Endothelial cell of umbilical vein (primary cell): ENCODE measurements at regions of chr3 and their contacts with region 1.

Region 1: DNA sequence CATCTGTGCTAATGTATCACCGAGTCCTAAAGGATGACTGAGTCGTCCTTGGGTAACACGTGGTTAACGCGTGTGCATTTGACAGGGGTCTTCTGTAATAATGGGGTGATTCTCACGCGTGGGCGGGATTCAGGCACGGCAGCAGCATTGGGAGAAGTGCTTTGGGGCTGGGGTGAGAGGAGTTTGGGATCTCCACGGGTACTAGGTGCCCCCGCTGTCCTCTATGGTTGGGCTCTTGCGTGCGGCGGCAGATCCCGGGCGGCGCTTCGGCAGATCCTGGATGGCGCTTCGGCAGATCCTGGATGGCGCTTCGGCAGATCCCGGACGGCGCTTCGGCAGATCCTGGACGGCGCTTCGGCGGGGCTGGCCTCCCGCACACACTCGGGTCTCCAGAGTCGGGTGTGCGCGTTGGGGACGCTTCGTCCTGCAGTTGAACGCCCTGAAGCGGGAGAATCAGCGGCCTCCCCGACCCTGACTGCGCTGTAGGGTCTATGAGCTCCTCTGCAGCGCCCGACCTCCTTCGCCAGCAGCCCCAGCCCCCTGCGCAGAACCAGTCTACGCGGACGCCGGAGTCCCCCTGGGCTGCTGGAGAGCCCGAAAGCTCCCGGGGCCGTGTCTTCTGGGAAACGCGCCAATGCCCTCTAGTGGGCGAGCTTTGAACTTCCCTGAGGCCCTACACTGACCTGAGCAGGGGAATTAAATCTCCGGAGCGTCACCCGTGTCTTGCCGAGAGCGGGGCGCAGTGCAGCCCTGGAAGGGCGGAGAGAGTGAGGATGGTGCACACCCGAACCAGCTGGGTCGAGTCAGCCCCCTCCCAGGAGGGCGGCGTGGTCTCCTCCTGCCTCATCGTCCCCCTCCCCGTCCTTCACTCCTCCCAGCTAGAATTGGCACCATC is 48.1 kb upstream of the EPHB3 start:
- DNase-seq: peak; percentile 79
- H3K4me3 ChIP-seq: peak overlapping the region in 1 of 3 experiments; percentile 11
- H3K27ac ChIP-seq: no peak overlapping the region
- H3K4me1 ChIP-seq: peaks cover 5% of the 10 kb centered on the region
- H3K27me3 ChIP-seq: peaks cover 28 to 32% of the 10 kb centered on the region in 2 experiments
- CTCF ChIP-seq: peak; percentile 82 to 89
- POLR2A ChIP-seq: no peak

Region 2: GRCh38 chr3:184423561-184423960 is 90.0 kb before region 1 on chr3:
- CTCF ChIA-PET with region 1: interaction called, 109 read pairs
- POLR2A ChIA-PET with region 1: no interaction called
- dilution Hi-C with region 1: no loop called
- intact Hi-C with region 1: loop called (anchors 1 kb)
- DNase-seq: no peak
- H3K4me3 ChIP-seq: no peak overlapping the region
- H3K27ac ChIP-seq: no peak overlapping the region
- H3K4me1 ChIP-seq: no peaks in the 10 kb centered on the region
- H3K27me3 ChIP-seq: peaks cover 0 to 2% of the 10 kb centered on the region in 2 experiments
- CTCF ChIP-seq: no peak
- POLR2A ChIP-seq: no peak

Region 3: DNA sequence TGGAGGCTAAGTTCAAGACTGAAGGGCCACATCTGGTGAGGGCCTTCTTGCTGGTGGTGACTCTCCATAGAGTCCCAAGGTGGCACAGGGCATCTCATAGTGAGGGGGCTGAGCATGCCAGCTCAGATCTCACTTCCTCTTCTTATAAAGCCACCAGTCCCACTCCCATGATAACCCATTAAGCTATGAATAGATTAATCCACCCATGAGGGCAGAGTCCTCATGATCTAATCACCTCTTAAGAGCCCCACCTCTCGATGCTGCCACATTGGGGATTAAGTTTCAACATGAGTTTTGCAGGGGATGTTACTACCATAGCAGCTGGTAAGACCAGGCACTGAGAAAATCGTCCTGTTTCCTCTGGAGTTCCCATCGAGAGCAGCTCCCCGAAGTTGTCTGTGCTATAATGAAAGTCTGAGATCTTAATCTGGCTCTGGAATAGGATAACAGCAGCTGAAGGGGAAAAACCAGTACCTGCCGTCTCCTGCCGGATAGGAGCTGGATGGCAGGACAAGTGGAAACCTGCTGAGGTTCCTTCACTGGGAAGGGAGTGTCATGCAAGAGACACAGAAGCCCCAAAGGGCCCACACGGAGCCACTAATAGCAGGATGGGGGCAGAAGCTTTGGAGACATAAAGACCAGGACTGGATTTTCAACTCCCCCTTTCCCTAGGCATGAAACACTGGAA is 31.4 kb before region 1 on chr3:
- CTCF ChIA-PET with region 1: interaction called, 67 read pairs
- POLR2A ChIA-PET with region 1: no interaction called
- dilution Hi-C with region 1: no loop called
- intact Hi-C with region 1: no loop called
- DNase-seq: no peak
- H3K4me3 ChIP-seq: no peak overlapping the region
- H3K27ac ChIP-seq: no peak overlapping the region
- H3K4me1 ChIP-seq: no peaks in the 10 kb centered on the region
- H3K27me3 ChIP-seq: peaks cover 6 to 16% of the 10 kb centered on the region in 2 experiments
- CTCF ChIP-seq: no peak
- POLR2A ChIP-seq: no peak

Region 4: GRCh38 chr3:184523825-184524615 is 10.5 kb after region 1 on chr3:
- CTCF ChIA-PET with region 1: interaction called, 32 read pairs
- POLR2A ChIA-PET with region 1: no interaction called
- dilution Hi-C with region 1: no loop called
- intact Hi-C with region 1: loop called (anchors 1 kb)
- DNase-seq: peak; percentile 44
- H3K4me3 ChIP-seq: no peak overlapping the region
- H3K27ac ChIP-seq: no peak overlapping the region
- H3K4me1 ChIP-seq: peaks cover 19% of the 10 kb centered on the region
- H3K27me3 ChIP-seq: peaks cover 0 to 4% of the 10 kb centered on the region in 2 experiments
- CTCF ChIP-seq: no peak
- POLR2A ChIP-seq: no peak

Region 5: GRCh38 chr3:184543843-184544512 is 30.5 kb after region 1 on chr3:
- CTCF ChIA-PET with region 1: interaction called, 76 read pairs
- POLR2A ChIA-PET with region 1: no interaction called
- dilution Hi-C with region 1: no loop called
- intact Hi-C with region 1: loop called (anchors 1 kb)
- DNase-seq: peak; percentile 70
- H3K4me3 ChIP-seq: no peak overlapping the region
- H3K27ac ChIP-seq: no peak overlapping the region
- H3K4me1 ChIP-seq: no peaks in the 10 kb centered on the region
- H3K27me3 ChIP-seq: peaks cover 5 to 6% of the 10 kb centered on the region in 2 experiments
- CTCF ChIP-seq: peak; percentile 69 to 85
- POLR2A ChIP-seq: no peak

Region 6: DNA sequence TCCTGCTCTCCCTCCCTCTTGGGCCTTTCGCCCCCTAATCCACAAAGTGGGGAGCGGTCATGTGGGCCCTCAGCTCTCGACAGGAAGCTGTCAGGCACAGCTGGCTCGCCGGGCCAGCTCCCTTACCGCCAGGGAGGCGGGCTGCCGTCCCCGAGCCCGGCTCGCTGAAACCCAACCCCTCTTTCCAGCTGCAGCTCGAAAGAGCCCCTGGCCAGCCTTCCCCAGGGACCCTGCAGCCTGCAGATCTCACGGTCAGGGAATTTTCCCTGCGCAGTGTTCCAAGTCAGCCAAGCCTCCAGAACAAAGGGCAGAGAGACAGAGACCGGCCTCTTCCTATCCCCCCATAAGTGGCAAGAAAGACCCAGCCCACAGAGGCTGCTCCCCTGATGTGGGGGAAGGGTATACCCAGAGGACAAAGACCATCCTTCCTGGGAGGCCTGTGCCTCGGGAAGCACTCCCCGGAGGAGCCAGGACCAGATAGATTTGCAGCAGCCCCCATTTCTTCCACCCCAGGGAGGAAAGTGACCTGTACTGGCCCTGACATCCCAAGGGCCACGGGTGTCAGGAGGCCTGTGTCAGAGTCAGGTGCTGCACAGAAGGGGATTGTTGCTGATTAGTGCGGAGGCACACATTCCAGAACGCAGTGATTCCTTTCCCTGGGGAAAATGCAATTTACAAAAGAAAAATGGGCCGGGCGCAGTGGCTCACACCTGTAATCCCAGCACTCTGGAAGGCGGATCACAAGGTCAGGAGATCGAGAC is 165.7 kb after region 1 on chr3:
- CTCF ChIA-PET with region 1: no interaction called
- POLR2A ChIA-PET with region 1: no interaction called
- dilution Hi-C with region 1: no loop called
- intact Hi-C with region 1: no loop called
- DNase-seq: no peak
- H3K4me3 ChIP-seq: no peak overlapping the region
- H3K27ac ChIP-seq: no peak overlapping the region
- H3K4me1 ChIP-seq: no peaks in the 10 kb centered on the region
- H3K27me3 ChIP-seq: peaks cover 0 to 2% of the 10 kb centered on the region in 2 experiments
- CTCF ChIP-seq: no peak
- POLR2A ChIP-seq: no peak